ENCODE measurements at regions of chr10 and their contacts with region 1.

Region 1: DNA sequence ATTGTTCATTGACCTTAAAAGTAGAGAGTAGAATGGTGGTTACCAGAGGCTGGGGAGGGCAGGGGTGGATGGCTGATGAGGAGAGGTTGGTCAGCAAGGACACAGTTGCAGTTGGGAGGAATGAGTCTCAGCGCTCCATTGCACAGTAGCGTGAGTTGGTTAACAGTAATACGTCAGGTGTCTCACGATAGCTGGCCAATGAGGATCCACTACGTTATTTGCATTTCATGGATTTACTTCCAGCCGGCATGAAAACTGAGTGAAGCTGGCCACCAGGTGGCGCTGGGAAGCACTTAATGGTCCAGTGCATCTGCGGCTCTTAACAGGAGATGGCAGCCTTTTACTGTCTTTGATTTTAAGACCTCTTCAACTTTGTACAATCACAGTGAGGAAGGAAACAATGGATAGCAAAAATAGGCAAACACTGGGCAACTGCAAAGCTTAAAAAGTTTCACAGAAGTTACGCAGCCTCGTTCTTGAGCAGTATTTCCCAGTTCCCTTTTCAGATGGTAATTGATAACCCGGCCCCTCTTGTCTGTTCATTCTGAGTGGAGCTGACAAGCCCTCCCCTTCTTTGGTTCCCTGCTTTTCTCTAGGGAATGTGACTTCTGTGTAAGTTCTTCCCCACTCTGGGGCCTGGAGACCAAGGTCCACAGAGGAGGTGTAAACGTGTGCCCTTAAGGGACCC is 23.7 kb downstream of the AKR1E2 start:
- DNase-seq: peak; percentile 78 to 85
- ATAC-seq: peak; percentile 96 to 97
- H3K4me3 ChIP-seq: peak overlapping the region in 1 of 4 donors; percentile 9
- H3K27ac ChIP-seq: peak overlapping the region; percentile 10 to 51 (median 18)
- H3K4me1 ChIP-seq: peaks cover 4 to 9% of the 10 kb centered on the region in 2 donors
- H3K27me3 ChIP-seq: no peaks in the 10 kb centered on the region
- CTCF ChIP-seq: peak; percentile 96 to 99 (median 98)
- POLR2A ChIP-seq: no peak

Region 2: GRCh38 chr10:4981722-4982471 is 132.2 kb after region 1 on chr10:
- in situ Hi-C with region 1: loop called in 3 of 4 experiments (anchors 10 to 25 kb)
- intact Hi-C with region 1: loop called (anchors 1 kb)
- DNase-seq: peak; percentile 5 to 16
- ATAC-seq: peak; percentile 24 to 58
- H3K4me3 ChIP-seq: no peak overlapping the region
- H3K27ac ChIP-seq: peak overlapping the region in 3 of 4 donors; percentile 36 to 61 (median 45)
- H3K4me1 ChIP-seq: peaks cover 4 to 7% of the 10 kb centered on the region in 2 donors
- H3K27me3 ChIP-seq: no peaks in the 10 kb centered on the region
- CTCF ChIP-seq: peak; percentile 43 to 58 (median 44)
- POLR2A ChIP-seq: no peak

Region 3: GRCh38 chr10:5283305-5284158 is 433.8 kb after region 1 on chr10:
- in situ Hi-C with region 1: loop called (anchors 5 to 25 kb)
- intact Hi-C with region 1: loop called (anchors 1 kb)
- DNase-seq: peak; percentile 19 to 49
- ATAC-seq: peak; percentile 78 to 87
- H3K4me3 ChIP-seq: no peak overlapping the region
- H3K27ac ChIP-seq: no peak overlapping the region
- H3K4me1 ChIP-seq: no peaks in the 10 kb centered on the region
- H3K27me3 ChIP-seq: no peaks in the 10 kb centered on the region
- CTCF ChIP-seq: peak; percentile 40 to 62 (median 57)
- POLR2A ChIP-seq: no peak

Region 4: GRCh38 chr10:5396556-5397300 is 547.0 kb after region 1 on chr10:
- in situ Hi-C with region 1: loop called in 1 of 4 experiments (anchors 25 kb)
- intact Hi-C with region 1: no loop called
- DNase-seq: no peak
- ATAC-seq: no peak
- H3K4me3 ChIP-seq: no peak overlapping the region
- H3K27ac ChIP-seq: no peak overlapping the region
- H3K4me1 ChIP-seq: no peaks in the 10 kb centered on the region
- H3K27me3 ChIP-seq: no peaks in the 10 kb centered on the region
- CTCF ChIP-seq: no peak
- POLR2A ChIP-seq: no peak

Region 5: DNA sequence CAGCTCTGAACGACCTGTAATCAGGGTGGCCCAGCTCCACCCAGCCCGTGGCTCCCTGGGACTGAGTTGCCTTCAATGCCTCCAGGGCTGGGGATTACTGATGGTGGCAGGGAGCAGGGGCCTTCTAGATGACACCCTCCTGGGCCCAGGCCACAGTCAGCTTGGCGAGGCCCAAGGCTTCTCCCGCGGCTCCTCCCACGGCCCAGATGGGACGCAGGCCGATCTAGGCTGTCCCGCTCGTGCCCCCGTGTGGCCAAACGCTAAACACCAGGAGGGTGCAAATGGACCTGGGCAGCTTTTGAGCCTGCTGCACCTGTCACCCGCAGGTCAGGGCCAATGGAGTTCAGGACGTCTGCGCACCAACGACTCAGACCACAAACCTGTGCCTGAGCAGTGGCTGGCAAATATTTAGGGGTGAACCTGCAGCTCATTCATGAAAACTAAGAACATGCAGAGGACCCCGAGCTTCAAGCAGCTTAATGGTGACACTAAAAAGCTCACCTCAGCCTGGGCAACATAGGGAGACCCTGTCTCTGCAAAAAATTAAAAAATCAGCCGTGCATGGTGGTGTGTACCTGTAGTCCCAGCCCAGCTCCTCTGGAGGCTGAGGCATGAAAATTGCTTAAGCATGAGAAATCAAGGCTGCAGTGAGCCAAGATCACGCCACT is 773.5 kb after region 1 on chr10:
- in situ Hi-C with region 1: loop called in 1 of 4 experiments (anchors 25 kb)
- intact Hi-C with region 1: no loop called
- DNase-seq: peak; percentile 67 to 85
- ATAC-seq: peak; percentile 81 to 83
- H3K4me3 ChIP-seq: peak overlapping the region in 1 of 4 donors; percentile 26
- H3K27ac ChIP-seq: peak overlapping the region; percentile 26 to 61 (median 46)
- H3K4me1 ChIP-seq: peaks cover 30 to 35% of the 10 kb centered on the region in 2 donors
- H3K27me3 ChIP-seq: no peaks in the 10 kb centered on the region
- CTCF ChIP-seq: peak; percentile 81 to 95 (median 92)
- POLR2A ChIP-seq: no peak